MCF 10A (cell line): ENCODE measurements at regions of chr17 and their contacts with region 1.

Region 1: DNA sequence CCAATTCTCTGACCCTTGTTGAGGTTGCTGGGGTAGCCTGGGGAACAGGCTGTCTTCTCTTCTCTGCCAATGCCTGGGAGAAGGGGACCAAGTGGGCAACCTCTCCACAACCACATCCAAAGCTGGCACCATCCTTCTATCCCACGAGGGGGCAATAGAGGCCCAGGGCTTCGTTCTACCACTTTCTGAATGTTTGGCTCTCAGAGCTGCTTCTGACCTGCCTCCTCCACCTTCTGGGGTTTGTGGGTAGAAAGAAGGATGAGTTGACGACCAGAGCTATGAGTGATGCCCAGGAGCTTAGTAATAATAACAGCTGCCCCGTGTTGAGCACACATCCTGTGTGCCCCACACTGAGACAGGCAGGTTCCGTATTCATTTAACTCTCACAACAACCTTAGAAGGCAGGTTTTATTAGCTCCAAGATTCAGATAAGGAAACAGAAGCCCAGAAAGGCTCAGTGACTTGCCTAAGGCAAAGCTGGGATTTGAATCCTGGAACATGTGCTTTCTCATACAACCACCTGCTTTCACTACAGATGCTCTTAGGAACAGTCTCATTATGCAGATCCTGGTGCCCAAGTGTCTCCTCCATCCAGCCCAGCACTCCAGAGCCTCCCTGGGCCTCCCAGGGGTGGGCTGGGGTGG is 11.1 kb downstream of the TSPOAP1 start:
- DNase-seq: peak; percentile 78
- H3K4me3 Mint-ChIP-seq: no peak overlapping the region
- H3K27ac Mint-ChIP-seq: no peak overlapping the region
- H3K4me1 Mint-ChIP-seq: peaks cover 11% of the 10 kb centered on the region
- H3K27me3 Mint-ChIP-seq: no peaks in the 10 kb centered on the region
- CTCF ChIP-seq: peak; percentile 86

Region 2: GRCh38 chr17:57442914-57443571 is 874.5 kb before region 1 on chr17:
- CTCF ChIA-PET with region 1: no interaction called
- POLR2A ChIA-PET with region 1: no interaction called
- intact Hi-C with region 1: no loop called
- DNase-seq: peak; percentile 59
- H3K4me3 Mint-ChIP-seq: no peak overlapping the region
- H3K27ac Mint-ChIP-seq: peak overlapping the region; percentile 90
- H3K4me1 Mint-ChIP-seq: peaks cover 34% of the 10 kb centered on the region
- H3K27me3 Mint-ChIP-seq: no peaks in the 10 kb centered on the region
- CTCF ChIP-seq: no peak

Region 3: GRCh38 chr17:58303971-58304725 is 13.4 kb before region 1 on chr17:
- CTCF ChIA-PET with region 1: interaction called, 20 read pairs
- POLR2A ChIA-PET with region 1: no interaction called
- intact Hi-C with region 1: no loop called
- DNase-seq: peak; percentile 58
- H3K4me3 Mint-ChIP-seq: no peak overlapping the region
- H3K27ac Mint-ChIP-seq: no peak overlapping the region
- H3K4me1 Mint-ChIP-seq: no peaks in the 10 kb centered on the region
- H3K27me3 Mint-ChIP-seq: peaks cover 53% of the 10 kb centered on the region
- CTCF ChIP-seq: peak; percentile 53

Region 4: GRCh38 chr17:58328195-58329034 is 10.9 kb after region 1 on chr17 and contains the start of gene TSPOAP1:
- CTCF ChIA-PET with region 1: interaction called, 14 read pairs
- POLR2A ChIA-PET with region 1: no interaction called
- intact Hi-C with region 1: no loop called
- DNase-seq: no peak
- H3K4me3 Mint-ChIP-seq: no peak within 1 kb of the TSS
- H3K27ac Mint-ChIP-seq: no peak within 1 kb of the TSS
- H3K4me1 Mint-ChIP-seq: no peaks in the 10 kb centered on the region
- H3K27me3 Mint-ChIP-seq: peaks cover 43% of the 10 kb centered on the region
- CTCF ChIP-seq: no peak
- total RNA-seq, gene TSPOAP1: not detected in 2 replicates

Region 5: GRCh38 chr17:58337600-58338453 is 20.3 kb after region 1 on chr17:
- CTCF ChIA-PET with region 1: interaction called, 11 read pairs
- POLR2A ChIA-PET with region 1: no interaction called
- intact Hi-C with region 1: no loop called
- DNase-seq: peak; percentile 62
- H3K4me3 Mint-ChIP-seq: no peak overlapping the region
- H3K27ac Mint-ChIP-seq: no peak overlapping the region
- H3K4me1 Mint-ChIP-seq: no peaks in the 10 kb centered on the region
- H3K27me3 Mint-ChIP-seq: no peaks in the 10 kb centered on the region
- CTCF ChIP-seq: no peak

Region 6: DNA sequence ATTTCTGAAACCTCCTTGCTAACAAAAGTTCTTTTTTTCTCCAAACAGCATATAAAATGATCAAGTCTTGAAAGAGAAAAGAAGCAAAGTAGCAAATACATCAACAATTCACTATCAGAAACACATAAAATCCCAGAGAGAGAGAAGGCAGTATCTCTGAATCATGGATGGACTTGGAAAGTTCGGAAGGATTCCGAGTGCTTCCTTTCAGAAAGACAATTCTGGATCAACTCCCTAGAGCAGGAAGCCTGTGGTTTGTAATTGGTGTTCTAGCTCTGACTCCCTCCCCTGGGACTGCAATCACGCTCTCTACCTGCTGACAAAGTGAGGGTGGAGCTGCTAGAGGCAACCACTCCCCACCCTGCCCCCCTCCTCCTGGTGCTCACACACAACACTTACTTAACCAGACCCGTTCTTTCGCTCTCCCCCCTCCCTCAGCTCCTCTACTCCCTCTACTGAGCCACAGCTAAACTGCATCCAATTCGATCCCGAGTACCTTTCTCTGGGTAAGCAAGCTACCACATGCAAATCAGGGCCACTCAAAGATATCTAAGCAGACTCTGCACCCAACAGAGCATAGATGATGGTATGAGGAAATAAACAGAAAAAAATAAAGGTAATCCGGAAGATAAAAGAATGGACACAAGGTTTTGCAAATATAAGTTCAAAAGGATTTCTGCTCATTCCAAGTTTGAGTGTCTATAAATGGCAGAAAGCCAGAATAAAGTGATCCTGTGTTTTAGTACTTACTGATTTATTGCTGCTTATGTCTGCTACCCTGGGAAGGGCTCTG is 100.0 kb after region 1 on chr17 and contains the start of gene RNF43:
- CTCF ChIA-PET with region 1: interaction called, 33 read pairs
- POLR2A ChIA-PET with region 1: interaction called, 28 read pairs
- intact Hi-C with region 1: loop called (anchors 1 kb)
- DNase-seq: peak; percentile 99
- H3K4me3 Mint-ChIP-seq: peak within 1 kb of the TSS; percentile 84
- H3K27ac Mint-ChIP-seq: peak within 1 kb of the TSS; percentile 95
- H3K4me1 Mint-ChIP-seq: peaks cover 30% of the 10 kb centered on the region
- H3K27me3 Mint-ChIP-seq: peaks cover 25% of the 10 kb centered on the region
- CTCF ChIP-seq: peak; percentile 75
- total RNA-seq, gene RNF43: 6.7 and 7.9 TPM in 2 replicates

Region 7: GRCh38 chr17:58436805-58437239 is 119.3 kb after region 1 on chr17:
- CTCF ChIA-PET with region 1: interaction called, 35 read pairs
- POLR2A ChIA-PET with region 1: no interaction called
- intact Hi-C with region 1: no loop called
- DNase-seq: no peak
- H3K4me3 Mint-ChIP-seq: no peak overlapping the region
- H3K27ac Mint-ChIP-seq: no peak overlapping the region
- H3K4me1 Mint-ChIP-seq: no peaks in the 10 kb centered on the region
- H3K27me3 Mint-ChIP-seq: peaks cover 69% of the 10 kb centered on the region
- CTCF ChIP-seq: no peak

Region 8: DNA sequence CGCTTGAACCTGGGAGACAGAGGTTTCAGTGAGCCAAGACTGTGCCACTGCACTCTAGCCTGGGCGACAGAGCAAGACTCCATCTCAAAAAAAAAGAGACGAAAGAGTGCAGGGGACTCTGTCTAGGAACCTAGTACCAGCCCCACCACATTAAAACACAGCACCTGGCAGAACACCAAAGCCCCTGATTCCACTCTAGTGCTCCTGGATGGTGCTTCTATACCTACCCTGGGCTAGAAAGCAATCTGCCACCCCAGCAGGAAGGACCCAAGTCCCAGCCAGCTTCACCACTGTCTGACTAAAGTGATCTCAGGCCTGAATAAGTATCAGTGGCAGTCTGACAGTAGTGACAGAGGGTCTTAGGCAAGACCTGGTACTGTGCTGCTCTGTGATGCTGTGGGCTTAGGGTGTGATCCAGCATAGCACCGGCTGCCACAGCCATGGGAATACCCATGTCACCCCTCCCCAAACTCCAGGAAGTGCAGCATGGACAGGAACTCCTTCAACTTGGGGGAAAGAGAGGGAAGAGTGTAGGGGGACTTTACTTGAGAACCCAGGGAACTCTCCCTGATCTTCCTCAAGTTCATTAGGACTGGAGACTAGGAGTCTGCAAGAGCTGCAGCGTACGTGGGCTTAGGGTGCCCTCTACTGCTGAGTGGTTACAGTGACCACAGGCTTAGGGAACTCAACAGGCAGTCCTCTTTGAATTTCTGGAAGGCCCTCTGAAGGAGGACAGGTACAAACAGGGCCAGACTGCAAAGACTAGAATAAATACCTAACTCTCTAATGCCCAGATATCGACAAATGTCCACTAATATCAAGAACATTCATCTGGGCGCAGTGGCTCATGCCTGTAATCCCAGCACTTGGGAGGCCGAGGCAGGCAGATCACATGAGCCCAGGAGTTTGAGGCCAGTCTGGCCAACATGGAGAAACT is 129.8 kb after region 1 on chr17:
- CTCF ChIA-PET with region 1: interaction called, 127 read pairs
- POLR2A ChIA-PET with region 1: interaction called, 6 read pairs
- intact Hi-C with region 1: loop called (anchors 1 kb)
- DNase-seq: peak; percentile 85
- H3K4me3 Mint-ChIP-seq: no peak overlapping the region
- H3K27ac Mint-ChIP-seq: no peak overlapping the region
- H3K4me1 Mint-ChIP-seq: no peaks in the 10 kb centered on the region
- H3K27me3 Mint-ChIP-seq: peaks cover 35% of the 10 kb centered on the region
- CTCF ChIP-seq: peak; percentile 86